ENCODE measurements at regions of chr3 and their contacts with region 1.

Region 1: GRCh38 chr3:136390574-136390973 is 140.4 kb downstream of the PCCB start:
- DNase-seq: no peak
- ATAC-seq: no peak
- H3K4me3 ChIP-seq: no peak overlapping the region
- H3K4me3 Mint-ChIP-seq: no peak overlapping the region
- H3K27ac ChIP-seq: no peak overlapping the region
- H3K27ac Mint-ChIP-seq: no peak overlapping the region
- H3K4me1 ChIP-seq: no peaks in the 10 kb centered on the region
- H3K4me1 Mint-ChIP-seq: peaks cover 2% of the 10 kb centered on the region
- H3K27me3 ChIP-seq: no peaks in the 10 kb centered on the region
- H3K27me3 Mint-ChIP-seq: no peaks in the 10 kb centered on the region
- CTCF ChIP-seq: no peak

Region 2: GRCh38 chr3:136055491-136055890 is 335.1 kb before region 1 on chr3:
- CTCF ChIA-PET with region 1: no interaction called
- POLR2A ChIA-PET with region 1: no interaction called
- intact Hi-C with region 1: no loop called
- DNase-seq: no peak
- ATAC-seq: no peak
- H3K4me3 ChIP-seq: no peak overlapping the region
- H3K4me3 Mint-ChIP-seq: no peak overlapping the region
- H3K27ac ChIP-seq: no peak overlapping the region
- H3K27ac Mint-ChIP-seq: no peak overlapping the region
- H3K4me1 ChIP-seq: no peaks in the 10 kb centered on the region
- H3K4me1 Mint-ChIP-seq: no peaks in the 10 kb centered on the region
- H3K27me3 ChIP-seq: no peaks in the 10 kb centered on the region
- H3K27me3 Mint-ChIP-seq: peaks cover 15% of the 10 kb centered on the region
- CTCF ChIP-seq: no peak

Region 3: DNA sequence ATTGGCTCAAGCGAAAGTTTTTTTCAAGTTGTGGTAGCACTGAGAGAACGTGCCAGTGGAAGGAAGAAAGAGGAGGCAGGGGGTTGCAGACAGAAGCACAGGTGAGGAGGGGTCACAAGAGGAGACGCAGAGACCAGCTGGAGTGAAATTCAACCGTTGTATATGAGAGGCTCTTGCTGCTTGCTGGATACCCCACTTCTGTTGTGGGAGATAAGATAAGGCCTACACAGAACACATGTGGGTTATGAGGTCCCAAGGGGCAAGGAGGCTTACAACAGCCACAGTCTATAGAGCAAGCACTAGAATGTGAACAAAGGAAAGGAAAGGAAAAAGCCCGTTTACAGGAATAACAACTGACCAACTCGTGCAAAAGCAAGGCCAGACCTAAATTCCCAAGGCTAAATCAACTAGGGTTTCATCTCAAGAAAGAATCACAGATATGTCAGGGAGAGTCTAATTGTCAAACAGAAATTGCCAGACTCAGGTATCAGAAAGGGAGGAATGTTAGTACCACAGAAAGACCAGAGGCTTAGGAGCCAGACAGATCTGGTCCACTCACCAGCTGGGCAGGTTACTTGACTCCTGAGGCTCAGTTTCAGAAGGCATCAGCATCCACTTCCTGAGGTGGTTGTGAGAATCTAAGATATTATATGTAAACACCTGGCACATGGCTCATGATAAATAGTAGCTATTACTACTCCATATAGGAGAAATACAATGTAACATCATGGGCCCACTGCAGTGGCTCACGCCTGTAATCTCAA is 255.4 kb before region 1 on chr3:
- CTCF ChIA-PET with region 1: no interaction called
- POLR2A ChIA-PET with region 1: no interaction called
- intact Hi-C with region 1: no loop called
- DNase-seq: no peak
- ATAC-seq: no peak
- H3K4me3 ChIP-seq: no peak overlapping the region
- H3K4me3 Mint-ChIP-seq: no peak overlapping the region
- H3K27ac ChIP-seq: no peak overlapping the region
- H3K27ac Mint-ChIP-seq: peak overlapping the region; percentile 37
- H3K4me1 ChIP-seq: no peaks in the 10 kb centered on the region
- H3K4me1 Mint-ChIP-seq: peaks cover 10% of the 10 kb centered on the region
- H3K27me3 ChIP-seq: no peaks in the 10 kb centered on the region
- H3K27me3 Mint-ChIP-seq: no peaks in the 10 kb centered on the region
- CTCF ChIP-seq: no peak

Region 4: GRCh38 chr3:136343446-136344281 is 46.9 kb before region 1 on chr3:
- CTCF ChIA-PET with region 1: no interaction called
- POLR2A ChIA-PET with region 1: no interaction called
- intact Hi-C with region 1: no loop called
- DNase-seq: no peak
- ATAC-seq: no peak
- H3K4me3 ChIP-seq: no peak overlapping the region
- H3K4me3 Mint-ChIP-seq: no peak overlapping the region
- H3K27ac ChIP-seq: no peak overlapping the region
- H3K27ac Mint-ChIP-seq: peak overlapping the region; percentile 18
- H3K4me1 ChIP-seq: no peaks in the 10 kb centered on the region
- H3K4me1 Mint-ChIP-seq: no peaks in the 10 kb centered on the region
- H3K27me3 ChIP-seq: no peaks in the 10 kb centered on the region
- H3K27me3 Mint-ChIP-seq: no peaks in the 10 kb centered on the region
- CTCF ChIP-seq: no peak

Region 5: DNA sequence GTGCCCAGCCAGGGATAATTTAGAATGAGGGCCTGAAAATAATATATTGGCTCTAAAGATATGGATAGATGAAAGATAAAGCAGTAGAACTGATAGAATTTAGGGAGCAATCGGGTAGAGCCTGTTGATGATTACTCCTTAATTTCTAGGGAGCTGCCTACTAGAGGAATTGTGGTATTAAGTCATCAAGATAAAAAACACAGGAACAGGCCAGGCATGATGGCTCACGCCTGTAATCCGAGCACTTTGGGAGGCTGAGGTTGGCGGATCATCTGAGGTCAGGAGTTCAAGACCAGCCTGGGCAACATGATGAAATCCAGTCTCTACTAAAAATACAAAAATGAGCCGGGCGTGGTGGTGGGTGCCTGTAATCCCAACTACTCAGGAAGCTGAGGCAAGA is 10.0 kb before region 1 on chr3:
- CTCF ChIA-PET with region 1: interaction called, 10 read pairs
- POLR2A ChIA-PET with region 1: no interaction called
- intact Hi-C with region 1: no loop called
- DNase-seq: no peak
- ATAC-seq: no peak
- H3K4me3 ChIP-seq: no peak overlapping the region
- H3K4me3 Mint-ChIP-seq: no peak overlapping the region
- H3K27ac ChIP-seq: no peak overlapping the region
- H3K27ac Mint-ChIP-seq: no peak overlapping the region
- H3K4me1 ChIP-seq: no peaks in the 10 kb centered on the region
- H3K4me1 Mint-ChIP-seq: no peaks in the 10 kb centered on the region
- H3K27me3 ChIP-seq: no peaks in the 10 kb centered on the region
- H3K27me3 Mint-ChIP-seq: no peaks in the 10 kb centered on the region
- CTCF ChIP-seq: no peak

Region 6: GRCh38 chr3:136456196-136456595 is 65.6 kb after region 1 on chr3:
- CTCF ChIA-PET with region 1: no interaction called
- POLR2A ChIA-PET with region 1: no interaction called
- intact Hi-C with region 1: no loop called
- DNase-seq: no peak
- ATAC-seq: no peak
- H3K4me3 ChIP-seq: no peak overlapping the region
- H3K4me3 Mint-ChIP-seq: no peak overlapping the region
- H3K27ac ChIP-seq: no peak overlapping the region
- H3K27ac Mint-ChIP-seq: no peak overlapping the region
- H3K4me1 ChIP-seq: no peaks in the 10 kb centered on the region
- H3K4me1 Mint-ChIP-seq: no peaks in the 10 kb centered on the region
- H3K27me3 ChIP-seq: no peaks in the 10 kb centered on the region
- H3K27me3 Mint-ChIP-seq: no peaks in the 10 kb centered on the region
- CTCF ChIP-seq: no peak

Region 7: DNA sequence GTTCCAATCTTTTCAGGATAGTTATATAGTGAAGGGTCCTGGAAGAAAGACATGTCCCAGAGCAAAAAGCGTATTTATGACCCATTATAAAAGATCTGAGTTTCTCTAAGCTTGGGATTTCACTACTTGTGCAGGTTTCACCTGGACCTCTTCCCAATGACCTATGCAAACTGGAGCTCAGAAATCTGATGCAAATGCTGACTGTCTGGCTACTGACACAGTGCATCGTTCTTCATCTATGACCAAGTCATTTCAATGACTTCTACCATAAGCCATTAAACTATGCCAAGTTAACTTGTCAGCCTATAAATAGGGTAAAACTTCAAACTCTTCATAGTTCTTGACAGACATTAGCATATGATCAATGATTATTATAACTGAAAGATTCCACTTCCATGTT is 350.5 kb after region 1 on chr3:
- CTCF ChIA-PET with region 1: interaction called, 13 read pairs
- POLR2A ChIA-PET with region 1: no interaction called
- intact Hi-C with region 1: no loop called
- DNase-seq: no peak
- ATAC-seq: no peak
- H3K4me3 ChIP-seq: no peak overlapping the region
- H3K4me3 Mint-ChIP-seq: no peak overlapping the region
- H3K27ac ChIP-seq: no peak overlapping the region
- H3K27ac Mint-ChIP-seq: no peak overlapping the region
- H3K4me1 ChIP-seq: peaks cover 2% of the 10 kb centered on the region
- H3K4me1 Mint-ChIP-seq: peaks cover 43% of the 10 kb centered on the region
- H3K27me3 ChIP-seq: no peaks in the 10 kb centered on the region
- H3K27me3 Mint-ChIP-seq: no peaks in the 10 kb centered on the region
- CTCF ChIP-seq: no peak